PC-3 (cell line): ENCODE measurements at regions of chr3 and their contacts with region 1.

Region 1: DNA sequence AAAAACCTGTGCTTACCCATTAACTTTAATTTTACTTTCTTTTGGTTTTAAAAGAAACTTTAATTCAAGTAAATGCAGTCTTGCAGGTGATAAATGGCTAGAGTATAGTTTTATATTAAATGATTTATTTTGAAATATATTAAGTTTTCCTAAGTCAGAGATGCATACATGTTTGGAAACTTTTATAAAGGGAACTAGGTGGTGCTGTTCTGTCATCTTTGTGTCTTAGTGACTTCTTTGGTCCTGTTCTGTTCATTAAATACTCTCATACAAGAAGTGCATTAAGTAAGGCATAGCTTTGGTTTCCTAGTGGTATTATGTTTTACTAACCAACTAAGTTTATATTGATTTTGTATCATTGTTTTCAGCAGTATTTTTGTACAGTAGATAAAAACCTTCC is 15.6 kb downstream of the CADM2 start:
- DNase-seq: peak; percentile 35
- ATAC-seq: peak; percentile 80
- H3K4me3 ChIP-seq: no peak overlapping the region
- H3K27ac ChIP-seq: no peak overlapping the region
- H3K4me1 ChIP-seq: no peaks in the 10 kb centered on the region
- H3K27me3 ChIP-seq: peaks cover 12% of the 10 kb centered on the region; the same call in 1 of the 2 replicates
- CTCF ChIP-seq: peak; percentile 50

Region 2: DNA sequence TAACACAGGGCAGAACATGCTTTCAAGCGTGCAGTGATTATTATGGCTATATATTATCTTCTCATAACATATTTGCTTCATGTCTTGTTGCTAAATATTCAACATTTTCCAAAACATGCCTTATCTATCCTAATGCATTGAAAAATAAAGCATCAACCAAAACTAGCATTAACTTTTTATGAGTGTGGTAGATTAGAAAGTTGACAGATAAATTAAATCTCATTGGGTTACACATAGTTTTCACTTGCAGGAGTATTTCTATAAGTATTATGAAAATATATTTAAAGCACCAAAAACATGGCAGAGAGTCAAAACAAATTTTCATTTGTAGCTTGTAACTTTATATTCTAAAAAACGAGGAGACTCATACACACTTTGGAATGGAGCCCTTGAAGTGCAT is 126.0 kb after region 1 on chr3:
- CTCF ChIA-PET with region 1: no interaction called
- POLR2A ChIA-PET with region 1: no interaction called
- intact Hi-C with region 1: loop called (anchors 5 kb)
- DNase-seq: no peak
- ATAC-seq: no peak
- H3K4me3 ChIP-seq: no peak overlapping the region
- H3K27ac ChIP-seq: no peak overlapping the region
- H3K4me1 ChIP-seq: no peaks in the 10 kb centered on the region
- H3K27me3 ChIP-seq: no peaks in the 10 kb centered on the region
- CTCF ChIP-seq: no peak

Region 3: DNA sequence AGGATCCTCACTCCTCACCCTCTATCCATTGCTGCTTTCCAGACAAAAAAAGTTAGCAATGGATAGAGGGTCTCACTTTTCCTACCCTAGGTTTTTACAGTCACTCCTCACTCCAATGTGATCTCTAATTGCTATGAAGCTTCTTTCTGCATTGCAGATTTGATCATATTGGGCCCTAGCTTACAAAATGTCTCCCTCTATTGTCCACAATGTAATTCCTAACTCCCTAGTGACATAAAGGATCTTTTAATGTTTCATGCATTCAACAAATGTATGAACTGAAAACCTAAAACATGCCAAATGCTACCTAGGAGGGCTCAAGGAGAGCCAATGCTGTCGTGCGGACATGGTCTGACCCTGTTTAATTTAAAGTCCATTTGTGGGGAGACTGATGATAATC is 219.2 kb after region 1 on chr3:
- CTCF ChIA-PET with region 1: no interaction called
- POLR2A ChIA-PET with region 1: no interaction called
- intact Hi-C with region 1: loop called (anchors 5 kb)
- DNase-seq: peak; percentile 52
- ATAC-seq: peak; percentile 55; the same call in 1 of the 2 replicates
- H3K4me3 ChIP-seq: no peak overlapping the region
- H3K27ac ChIP-seq: no peak overlapping the region
- H3K4me1 ChIP-seq: no peaks in the 10 kb centered on the region
- H3K27me3 ChIP-seq: no peaks in the 10 kb centered on the region
- CTCF ChIP-seq: peak; percentile 68

Region 4: GRCh38 chr3:85342915-85343314 is 368.6 kb after region 1 on chr3:
- CTCF ChIA-PET with region 1: no interaction called
- POLR2A ChIA-PET with region 1: no interaction called
- intact Hi-C with region 1: loop called (anchors 2 kb)
- DNase-seq: peak; percentile 69
- ATAC-seq: peak; percentile 87
- H3K4me3 ChIP-seq: no peak overlapping the region
- H3K27ac ChIP-seq: no peak overlapping the region
- H3K4me1 ChIP-seq: peaks cover 13% of the 10 kb centered on the region
- H3K27me3 ChIP-seq: no peaks in the 10 kb centered on the region
- CTCF ChIP-seq: peak; percentile 87

Region 5: GRCh38 chr3:85360742-85361387 is 386.5 kb after region 1 on chr3:
- CTCF ChIA-PET with region 1: no interaction called
- POLR2A ChIA-PET with region 1: no interaction called
- intact Hi-C with region 1: loop called (anchors 1 kb)
- DNase-seq: peak; percentile 83
- ATAC-seq: peak; percentile 100
- H3K4me3 ChIP-seq: no peak overlapping the region
- H3K27ac ChIP-seq: no peak overlapping the region
- H3K4me1 ChIP-seq: no peaks in the 10 kb centered on the region
- H3K27me3 ChIP-seq: no peaks in the 10 kb centered on the region
- CTCF ChIP-seq: peak; percentile 94

Region 6: GRCh38 chr3:85576091-85576690 is 601.8 kb after region 1 on chr3:
- CTCF ChIA-PET with region 1: no interaction called
- POLR2A ChIA-PET with region 1: no interaction called
- intact Hi-C with region 1: loop called (anchors 2 kb)
- DNase-seq: peak; percentile 85
- ATAC-seq: 0 out of 2 replicates have a peak, but pooled peaks have one; percentile 56
- H3K4me3 ChIP-seq: no peak overlapping the region
- H3K27ac ChIP-seq: no peak overlapping the region
- H3K4me1 ChIP-seq: no peaks in the 10 kb centered on the region
- H3K27me3 ChIP-seq: no peaks in the 10 kb centered on the region
- CTCF ChIP-seq: peak; percentile 87

Region 7: GRCh38 chr3:85801955-85802354 is 827.6 kb after region 1 on chr3:
- CTCF ChIA-PET with region 1: no interaction called
- POLR2A ChIA-PET with region 1: no interaction called
- intact Hi-C with region 1: loop called (anchors 10 kb)
- DNase-seq: peak; percentile 80
- ATAC-seq: peak; percentile 95
- H3K4me3 ChIP-seq: no peak overlapping the region
- H3K27ac ChIP-seq: no peak overlapping the region
- H3K4me1 ChIP-seq: no peaks in the 10 kb centered on the region; the same call in 1 of the 2 replicates
- H3K27me3 ChIP-seq: no peaks in the 10 kb centered on the region
- CTCF ChIP-seq: peak; percentile 91